ENCODE measurements at regions of chr12 and their contacts with region 1.

Region 1: DNA sequence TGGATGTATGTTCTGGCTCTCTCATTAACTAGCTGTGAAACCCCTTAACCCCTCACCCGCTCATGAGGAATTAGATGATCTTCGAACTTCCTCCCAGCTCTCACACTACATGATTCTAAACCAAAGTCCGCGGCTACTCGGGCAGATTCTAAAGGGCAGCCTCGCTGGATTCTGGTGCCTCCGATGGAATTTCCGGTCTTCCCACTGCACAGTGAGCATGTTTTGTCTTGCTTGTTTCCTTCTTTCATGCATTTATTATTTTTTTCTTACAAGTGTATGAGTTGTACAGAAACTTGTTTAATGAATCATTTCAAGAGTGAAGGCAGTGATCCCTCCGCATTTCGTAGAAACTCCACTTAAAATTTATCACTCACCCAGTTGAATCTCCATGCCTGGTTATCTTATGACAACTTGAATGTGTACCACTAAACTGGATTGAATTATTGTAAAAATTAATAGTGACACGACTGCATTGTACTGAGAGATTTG is 4.5 kb upstream of the HCAR3 start:
- DNase-seq: peak; percentile 26
- ATAC-seq: peak; percentile 64
- H3K4me3 Mint-ChIP-seq: no peak overlapping the region
- H3K27ac Mint-ChIP-seq: peak overlapping the region; percentile 80
- H3K4me1 Mint-ChIP-seq: peaks cover 41% of the 10 kb centered on the region
- H3K27me3 Mint-ChIP-seq: no peaks in the 10 kb centered on the region

Region 2: DNA sequence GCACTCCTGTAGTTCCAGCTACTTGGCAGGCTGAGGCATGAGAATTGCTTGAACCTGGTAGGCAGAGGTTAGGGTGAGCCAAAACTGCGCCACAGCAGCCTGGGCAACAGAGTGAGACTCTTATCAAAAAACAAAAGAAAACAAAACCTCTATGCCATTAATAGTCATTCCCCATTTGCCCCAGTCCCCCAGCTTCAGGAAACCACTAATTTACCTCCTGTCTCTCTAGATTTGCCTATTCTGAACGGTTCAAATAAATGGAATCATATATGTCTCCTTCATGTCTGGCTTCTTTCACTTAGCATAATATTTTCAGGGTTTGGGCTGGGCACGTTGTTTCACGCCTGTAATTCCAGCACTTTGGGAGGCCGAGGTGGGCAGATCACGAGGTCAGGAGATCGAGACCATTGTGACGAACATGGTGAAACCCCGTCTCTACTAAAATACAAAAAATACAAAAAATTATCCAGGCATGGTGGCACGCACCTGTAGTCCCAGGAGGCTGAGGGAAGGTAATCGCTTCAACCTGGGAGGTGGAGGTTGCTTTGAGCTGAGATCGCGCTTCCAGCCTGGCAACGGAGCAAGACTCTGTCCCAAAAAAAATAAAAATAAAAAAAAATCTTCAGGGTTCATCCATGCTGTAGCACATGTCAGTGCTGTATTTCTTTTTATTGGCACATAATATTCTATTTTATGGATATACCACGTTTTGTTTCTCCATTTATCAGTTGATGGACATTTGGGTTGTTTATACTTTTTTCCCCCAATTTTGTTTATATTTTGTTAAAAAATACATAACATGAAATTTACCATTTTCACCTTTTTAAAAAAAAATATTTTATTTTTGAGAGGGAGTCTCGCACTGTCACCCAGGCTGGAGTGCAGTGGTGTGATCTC is 162.1 kb before region 1 on chr12:
- CTCF ChIA-PET with region 1: no interaction called
- POLR2A ChIA-PET with region 1: no interaction called
- intact Hi-C with region 1: no loop called
- DNase-seq: no peak
- ATAC-seq: no peak
- H3K4me3 Mint-ChIP-seq: no peak overlapping the region
- H3K27ac Mint-ChIP-seq: no peak overlapping the region
- H3K4me1 Mint-ChIP-seq: peaks cover 4% of the 10 kb centered on the region
- H3K27me3 Mint-ChIP-seq: no peaks in the 10 kb centered on the region

Region 3: DNA sequence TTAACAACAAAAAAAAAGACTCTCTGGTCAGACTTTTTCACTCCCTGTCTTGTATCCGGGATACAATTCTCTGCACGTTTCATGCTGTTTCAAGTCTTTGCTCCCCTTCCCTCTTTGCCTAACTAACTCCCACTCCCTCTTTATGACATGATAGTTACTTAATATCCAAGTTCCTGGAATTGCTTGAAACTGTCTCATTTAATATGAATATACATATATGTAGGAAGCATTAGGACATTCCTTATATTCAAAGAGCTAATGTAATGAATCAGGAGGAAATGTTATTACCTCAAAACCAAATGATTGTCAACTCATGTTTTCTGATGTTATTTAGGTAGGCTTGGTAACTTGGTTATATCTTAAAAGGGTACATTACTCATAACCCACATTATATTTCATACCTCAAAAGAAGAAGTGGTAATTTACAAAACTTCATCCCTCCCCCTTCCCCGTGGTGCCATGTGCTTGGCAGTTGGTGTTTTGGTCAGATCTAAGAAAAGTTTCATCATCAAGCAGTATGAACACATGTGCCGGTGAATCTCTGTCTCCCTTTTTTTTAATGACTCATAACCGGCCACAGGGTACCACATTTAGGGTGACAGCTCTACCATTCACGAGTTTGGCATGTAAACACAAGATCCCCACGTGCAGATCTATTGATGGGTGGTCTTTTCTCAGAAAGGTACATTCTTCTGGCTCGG is 74.4 kb before region 1 on chr12:
- CTCF ChIA-PET with region 1: no interaction called
- POLR2A ChIA-PET with region 1: no interaction called
- intact Hi-C with region 1: loop called in 1 of 2 experiments (anchors 2 kb)
- DNase-seq: peak; percentile 81
- ATAC-seq: peak; percentile 97
- H3K4me3 Mint-ChIP-seq: peak overlapping the region; percentile 54
- H3K27ac Mint-ChIP-seq: peak overlapping the region; percentile 79
- H3K4me1 Mint-ChIP-seq: peaks cover 18% of the 10 kb centered on the region
- H3K27me3 Mint-ChIP-seq: peaks cover 2% of the 10 kb centered on the region

Measured in activated CD4-positive, alpha-beta T cell treated with anti-CD3 and anti-CD28 coated beads for 36 hours (primary cell).